ENCODE measurements at regions of chr17 and their contacts with region 1.

Region 1: DNA sequence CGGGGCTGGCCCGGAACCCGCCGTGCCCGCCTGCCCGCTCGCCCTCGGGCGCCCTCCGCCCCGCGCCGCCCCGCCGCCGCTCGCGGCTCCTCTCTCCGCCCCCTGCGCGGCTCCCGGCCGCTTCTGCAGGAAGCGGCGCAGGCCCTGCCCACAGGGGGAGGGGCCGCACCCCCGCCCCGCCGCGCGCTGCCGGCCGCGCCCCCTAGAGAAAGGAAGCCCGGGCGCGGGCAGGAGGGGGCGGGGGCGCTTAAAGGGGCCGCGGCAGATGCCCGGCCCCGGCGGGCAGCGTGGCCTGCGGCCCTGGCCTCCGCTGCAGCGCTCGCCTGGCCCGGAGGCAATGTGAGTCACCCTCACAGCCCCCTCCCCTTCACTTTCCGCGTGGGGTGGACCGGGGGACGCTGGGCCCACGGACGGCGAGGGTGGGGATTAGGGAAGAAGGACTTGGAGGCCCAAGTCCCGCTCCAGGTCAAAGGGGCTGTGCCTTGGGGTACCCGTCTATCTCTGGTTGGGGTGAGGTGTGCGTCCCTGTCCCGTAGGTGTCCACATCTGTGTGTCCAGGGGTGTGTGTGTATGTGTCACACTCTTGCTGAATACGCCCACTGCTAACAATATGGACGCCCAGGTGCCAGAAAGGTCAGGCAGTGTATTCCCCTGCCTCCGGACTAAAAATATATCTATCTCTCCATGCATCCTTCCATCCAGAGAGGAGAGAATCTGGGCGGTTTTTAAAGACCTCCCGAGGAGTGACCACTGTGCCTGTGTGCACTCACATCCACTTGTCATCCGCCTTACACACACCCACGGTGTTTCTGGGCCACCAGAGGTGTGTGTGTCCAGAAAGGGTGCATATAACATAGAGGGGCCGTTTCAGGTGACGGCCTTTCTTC is at the start of gene GIT1:
- H3K4me3 ChIP-seq: peak within 1 kb of the TSS; percentile 86
- H3K27ac ChIP-seq: peak within 1 kb of the TSS; percentile 82
- H3K4me1 ChIP-seq: peaks cover 26% of the 10 kb centered on the region
- CTCF ChIP-seq: no peak

Region 2: DNA sequence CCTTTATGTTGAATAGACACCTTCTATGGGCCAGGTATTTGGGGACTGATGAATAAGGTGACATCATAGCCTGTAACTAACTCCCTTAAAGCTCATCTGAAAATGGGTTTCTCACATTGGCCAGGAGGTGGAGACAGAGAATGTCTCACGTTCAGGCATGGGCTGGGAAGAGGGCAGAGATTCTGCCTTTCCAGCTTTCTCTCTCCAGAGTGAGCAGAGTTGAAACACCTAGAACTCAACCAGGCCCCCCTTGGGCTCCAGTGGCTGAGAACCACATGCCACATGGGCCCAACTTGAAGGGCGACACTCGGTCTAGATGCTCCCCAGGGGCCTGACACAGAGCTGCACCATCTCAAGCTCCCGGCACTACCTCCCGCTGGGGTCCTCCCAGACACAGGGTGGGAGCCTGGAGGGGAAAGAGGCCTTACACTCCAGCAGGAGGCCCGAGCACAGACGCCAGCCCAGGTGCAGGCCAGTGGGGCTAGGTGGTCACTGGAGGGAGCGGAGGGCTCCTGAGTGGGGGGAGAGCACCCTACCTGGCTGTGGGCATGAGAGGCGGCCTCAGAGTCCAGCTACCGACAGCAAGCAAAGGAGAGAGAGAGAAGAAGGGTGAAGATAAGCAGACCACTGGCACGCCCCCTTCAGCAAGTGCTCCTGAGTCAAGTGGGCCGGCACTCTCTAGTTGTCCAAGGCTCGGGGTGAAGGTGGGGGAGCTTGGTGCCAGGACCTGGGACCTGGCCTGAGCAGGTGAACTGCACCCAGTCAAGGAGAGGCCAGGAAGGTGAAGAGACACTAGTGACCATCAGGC is 465.4 kb before region 1 on chr17:
- CTCF ChIA-PET with region 1: interaction called, 12 read pairs
- POLR2A ChIA-PET with region 1: no interaction called
- H3K4me3 ChIP-seq: no peak overlapping the region
- H3K27ac ChIP-seq: no peak overlapping the region
- H3K4me1 ChIP-seq: no peaks in the 10 kb centered on the region
- CTCF ChIP-seq: peak; percentile 69

Region 3: DNA sequence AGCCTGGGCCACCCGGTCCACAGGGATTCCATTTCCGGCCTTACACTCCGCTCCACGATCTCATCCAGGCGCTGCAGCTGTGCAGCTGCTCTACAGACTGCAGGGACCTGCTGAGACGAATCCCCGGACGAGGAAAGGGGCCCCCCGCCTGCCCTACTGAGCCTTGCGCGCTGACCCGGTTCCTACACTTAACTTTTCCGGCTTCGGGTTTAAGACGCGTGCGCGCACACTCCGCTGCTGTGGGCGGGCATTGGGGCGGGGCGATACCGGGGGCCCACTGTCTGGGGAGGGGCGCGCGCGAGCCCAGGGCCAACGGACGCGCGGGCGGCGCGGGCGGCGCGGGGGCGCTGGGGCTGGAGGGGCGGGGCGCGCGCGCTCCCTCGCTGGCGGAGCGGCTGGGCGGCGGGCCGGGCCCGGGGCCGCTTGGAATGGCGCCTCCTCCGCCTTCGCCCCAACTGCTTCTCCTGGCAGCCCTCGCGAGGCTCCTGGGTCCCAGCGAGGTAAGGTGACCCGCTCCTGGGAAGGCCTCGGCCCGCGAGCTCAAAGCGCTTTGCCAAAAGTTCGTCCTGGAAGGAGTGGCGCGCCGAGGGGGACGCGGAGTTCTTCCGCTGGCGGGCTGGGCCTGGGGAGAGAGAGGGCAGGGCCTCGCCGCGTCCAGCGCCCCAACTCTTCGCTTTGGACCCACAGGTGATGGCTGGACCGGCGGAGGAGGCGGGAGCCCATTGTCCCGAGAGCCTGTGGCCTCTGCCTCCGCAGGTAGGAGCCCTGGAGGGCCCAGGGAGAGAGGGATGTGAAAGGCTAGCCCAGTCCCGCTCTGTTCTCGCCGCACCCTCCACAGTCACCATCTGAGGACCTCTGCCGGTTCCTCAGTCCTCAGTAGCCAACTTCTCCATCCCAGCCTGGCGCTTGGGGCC is 21.2 kb before region 1 on chr17 and contains the start of gene TP53I13:
- CTCF ChIA-PET with region 1: interaction called, 31 read pairs
- POLR2A ChIA-PET with region 1: interaction called, 28 read pairs
- H3K4me3 ChIP-seq: peak within 1 kb of the TSS; percentile 78
- H3K27ac ChIP-seq: peak within 1 kb of the TSS; percentile 96
- H3K4me1 ChIP-seq: peaks cover 13% of the 10 kb centered on the region
- CTCF ChIP-seq: peak; percentile 75

Region 4: GRCh38 chr17:29603109-29603674 is 13.4 kb after region 1 on chr17:
- CTCF ChIA-PET with region 1: interaction called, 23 read pairs
- POLR2A ChIA-PET with region 1: no interaction called
- H3K4me3 ChIP-seq: no peak overlapping the region
- H3K27ac ChIP-seq: no peak overlapping the region
- H3K4me1 ChIP-seq: no peaks in the 10 kb centered on the region; the same call in 1 of the 2 replicates
- CTCF ChIP-seq: no peak

Region 5: DNA sequence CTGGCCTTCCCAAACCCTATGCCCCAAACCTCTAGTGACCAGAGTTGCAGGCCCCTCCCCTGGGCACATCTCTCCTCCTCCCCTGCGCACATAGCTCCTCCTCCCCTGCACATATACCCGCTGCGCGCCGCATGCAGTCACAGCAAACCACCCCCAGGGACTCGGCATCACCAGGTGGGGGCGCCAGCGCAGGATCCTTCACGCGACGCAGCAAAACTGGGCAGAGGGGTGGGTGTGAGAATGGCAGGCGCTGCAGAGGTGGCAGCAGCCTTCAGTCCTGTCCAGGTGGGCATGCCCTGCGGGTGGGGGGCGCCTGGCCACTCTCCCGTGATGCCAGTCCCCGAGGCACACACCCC is 27.3 kb after region 1 on chr17:
- CTCF ChIA-PET with region 1: interaction called, 11 read pairs
- POLR2A ChIA-PET with region 1: interaction called, 7 read pairs
- H3K4me3 ChIP-seq: no peak overlapping the region
- H3K27ac ChIP-seq: no peak overlapping the region
- H3K4me1 ChIP-seq: peaks cover 12% of the 10 kb centered on the region
- CTCF ChIP-seq: peak; percentile 33; the same call in 1 of the 2 replicates

Region 6: DNA sequence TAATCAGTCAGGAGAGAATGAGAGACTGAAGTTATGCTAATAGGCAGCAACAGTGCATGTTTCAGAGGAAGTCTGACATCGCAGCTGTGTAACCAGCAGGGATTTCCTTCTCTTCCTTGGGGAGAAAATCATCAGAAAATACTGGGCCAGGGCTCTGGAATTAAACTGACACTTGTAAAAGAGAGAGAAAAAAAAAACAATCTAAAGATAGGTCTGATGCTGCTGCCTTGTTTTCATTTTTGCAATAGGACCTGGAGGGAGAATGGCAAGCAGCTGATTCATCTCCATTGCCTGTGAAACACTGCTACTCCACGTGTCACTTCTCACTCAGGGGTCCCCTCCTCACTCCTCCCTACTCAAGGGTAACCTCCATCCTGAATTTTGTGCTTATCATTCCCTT is 50.6 kb after region 1 on chr17:
- CTCF ChIA-PET with region 1: interaction called, 10 read pairs
- POLR2A ChIA-PET with region 1: interaction called, 6 read pairs
- H3K4me3 ChIP-seq: no peak overlapping the region
- H3K27ac ChIP-seq: no peak overlapping the region
- H3K4me1 ChIP-seq: peaks cover 35% of the 10 kb centered on the region
- CTCF ChIP-seq: no peak

Region 7: GRCh38 chr17:29710891-29711418 is 121.2 kb after region 1 on chr17:
- CTCF ChIA-PET with region 1: no interaction called
- POLR2A ChIA-PET with region 1: no interaction called
- H3K4me3 ChIP-seq: no peak overlapping the region
- H3K27ac ChIP-seq: no peak overlapping the region
- H3K4me1 ChIP-seq: peaks cover 9% of the 10 kb centered on the region; the same call in 1 of the 2 replicates
- CTCF ChIP-seq: no peak

Region 8: DNA sequence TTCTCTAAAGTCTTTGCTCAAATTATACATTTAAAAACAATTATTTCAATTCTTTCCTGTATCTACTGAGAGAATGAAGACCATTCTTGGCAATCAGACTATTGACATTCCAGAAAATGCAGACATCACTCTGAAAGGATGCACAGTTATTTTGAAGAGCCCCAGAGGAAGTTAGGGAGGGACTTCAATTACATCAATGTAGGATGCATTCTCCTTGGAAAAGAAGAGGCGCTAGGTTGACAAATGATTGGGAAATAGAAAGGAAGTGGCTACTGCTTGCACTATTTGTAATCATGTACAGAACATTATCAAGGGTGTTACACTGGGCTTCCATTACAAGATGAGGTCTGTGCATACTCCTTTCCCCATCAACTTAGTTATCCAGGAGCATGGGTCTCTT is 265.9 kb after region 1 on chr17:
- CTCF ChIA-PET with region 1: no interaction called
- POLR2A ChIA-PET with region 1: no interaction called
- H3K4me3 ChIP-seq: no peak overlapping the region
- H3K27ac ChIP-seq: no peak overlapping the region
- H3K4me1 ChIP-seq: no peaks in the 10 kb centered on the region
- CTCF ChIP-seq: no peak